ENCODE measurements at regions of chr12 and their contacts with region 1.

Region 1: DNA sequence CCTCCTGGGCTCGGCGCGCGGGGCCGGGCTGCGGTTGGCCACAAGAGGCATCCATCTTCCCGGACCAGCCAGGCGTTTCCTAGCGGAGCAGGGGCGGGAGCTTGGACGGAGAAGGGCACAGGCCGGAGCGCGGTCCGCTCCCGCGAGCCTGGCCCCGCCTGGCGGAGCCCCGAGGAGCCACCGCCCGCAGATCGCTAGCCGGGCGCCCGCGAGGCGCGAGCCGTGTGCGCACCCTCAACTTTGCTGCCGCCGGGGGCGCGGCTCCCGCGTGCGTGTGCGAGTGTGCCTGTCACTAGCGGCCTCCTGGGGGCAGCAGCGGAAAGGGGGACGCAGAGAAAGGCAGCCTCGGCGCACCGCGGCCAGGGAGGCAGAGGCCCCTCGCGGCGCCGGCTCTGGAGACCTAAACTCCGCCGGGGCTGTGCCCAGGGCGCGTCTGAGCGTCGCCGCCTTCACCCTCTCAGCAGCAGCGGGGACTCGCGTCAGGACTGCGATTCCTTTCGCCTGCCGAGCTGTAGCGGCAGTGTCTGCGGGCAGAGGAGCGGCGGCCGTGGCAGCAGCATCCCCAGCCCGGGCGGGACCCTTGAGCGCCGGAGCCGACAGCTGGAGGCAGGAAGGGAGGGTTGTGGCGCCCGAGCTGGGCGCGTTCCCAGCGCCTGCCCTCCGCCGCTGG is 644 bp upstream of the SRGAP1 start:
- DNase-seq: peak; percentile 89
- ATAC-seq: peak; percentile 96 to 97
- H3K4me3 ChIP-seq: peak overlapping the region; percentile 90
- H3K27ac ChIP-seq: peak overlapping the region; percentile 93
- H3K4me1 ChIP-seq: peaks cover 12% of the 10 kb centered on the region
- H3K27me3 ChIP-seq: no peaks in the 10 kb centered on the region
- CTCF ChIP-seq: peak; percentile 95

Region 2: GRCh38 chr12:63706336-63706735 is 137.5 kb before region 1 on chr12:
- intact Hi-C with region 1: no loop called
- DNase-seq: no peak
- ATAC-seq: no peak
- H3K4me3 ChIP-seq: no peak overlapping the region
- H3K27ac ChIP-seq: no peak overlapping the region
- H3K4me1 ChIP-seq: no peaks in the 10 kb centered on the region
- H3K27me3 ChIP-seq: no peaks in the 10 kb centered on the region
- CTCF ChIP-seq: no peak

Region 3: DNA sequence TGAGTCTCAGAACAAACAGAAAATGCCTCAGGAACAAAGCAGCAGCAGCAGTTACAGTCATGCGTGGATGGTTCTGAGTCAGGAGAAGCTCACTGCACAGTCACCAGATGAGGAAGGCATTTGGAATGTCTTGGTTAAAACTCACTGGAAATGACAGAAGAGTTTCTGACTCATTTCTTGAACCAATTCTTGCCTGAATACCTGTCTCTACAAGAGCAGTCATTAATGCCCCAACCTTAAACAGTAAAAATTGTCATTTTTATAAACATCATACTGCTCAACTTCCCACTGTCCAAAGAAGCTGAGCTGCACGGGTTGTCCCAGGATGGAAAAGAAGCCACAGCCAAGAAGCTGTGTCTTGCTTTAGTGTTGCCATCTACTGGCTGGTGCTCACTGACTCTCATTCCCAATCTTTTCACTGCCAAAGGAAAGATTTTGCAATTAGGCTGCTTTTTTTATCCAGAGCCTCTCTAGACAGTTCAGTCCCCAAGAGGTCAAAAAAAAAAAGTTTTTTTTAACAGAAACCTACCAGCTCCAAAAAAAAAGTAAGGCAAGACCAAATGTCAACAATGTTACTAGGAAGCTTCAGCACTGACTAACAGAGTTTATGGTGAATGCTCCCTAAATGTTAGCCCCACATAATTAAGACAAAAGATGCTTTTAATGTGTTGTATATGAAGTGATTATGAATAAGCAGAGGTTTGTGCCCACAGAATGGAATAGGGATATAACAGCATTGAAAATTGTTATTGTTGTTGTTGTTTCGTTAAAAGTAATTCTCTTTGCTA is 337.8 kb after region 1 on chr12:
- intact Hi-C with region 1: loop called (anchors 10 kb)
- DNase-seq: no peak
- ATAC-seq: peak; percentile 78 to 85
- H3K4me3 ChIP-seq: no peak overlapping the region
- H3K27ac ChIP-seq: no peak overlapping the region
- H3K4me1 ChIP-seq: peaks cover 12% of the 10 kb centered on the region
- H3K27me3 ChIP-seq: no peaks in the 10 kb centered on the region
- CTCF ChIP-seq: peak; percentile 66